Mammary epithelial cell (primary cell): ENCODE measurements at regions of chr5 and their contacts with region 1.

Region 1: GRCh38 chr5:175206669-175207068 is 237.3 kb downstream of the DRD1 start:
- DNase-seq: no peak
- H3K4me3 ChIP-seq: no peak overlapping the region
- H3K27ac ChIP-seq: no peak overlapping the region
- H3K4me1 ChIP-seq: no peaks in the 10 kb centered on the region
- H3K27me3 ChIP-seq: no peaks in the 10 kb centered on the region
- CTCF ChIP-seq: no peak

Region 2: DNA sequence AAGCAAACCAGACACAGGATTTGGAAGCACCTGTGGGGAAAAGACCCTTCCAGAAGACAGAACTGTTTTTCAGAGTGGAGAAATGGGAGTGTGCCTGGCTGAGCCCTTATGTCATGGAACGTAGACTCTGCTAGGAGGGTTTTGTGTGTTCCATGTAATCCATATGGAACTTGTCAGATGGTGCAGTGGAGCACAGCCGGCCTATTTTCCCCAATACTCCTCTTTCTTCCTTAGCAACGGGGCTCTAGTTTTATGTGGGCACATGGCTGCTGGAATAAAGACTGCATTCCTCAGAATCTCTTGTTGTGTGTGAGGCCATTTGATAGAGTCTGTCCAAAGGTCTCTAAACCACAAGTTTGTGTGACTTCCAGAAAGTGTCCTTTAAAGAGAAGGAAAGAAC is 46.7 kb before region 1 on chr5:
- CTCF ChIA-PET with region 1: no interaction called
- dilution Hi-C with region 1: loop called (anchors 5 kb)
- in situ Hi-C with region 1: no loop called
- intact Hi-C with region 1: no loop called
- DNase-seq: no peak
- H3K4me3 ChIP-seq: no peak overlapping the region
- H3K27ac ChIP-seq: no peak overlapping the region
- H3K4me1 ChIP-seq: no peaks in the 10 kb centered on the region
- H3K27me3 ChIP-seq: no peaks in the 10 kb centered on the region
- CTCF ChIP-seq: no peak